ENCODE measurements at regions of chr2 and their contacts with region 1.

Region 1: DNA sequence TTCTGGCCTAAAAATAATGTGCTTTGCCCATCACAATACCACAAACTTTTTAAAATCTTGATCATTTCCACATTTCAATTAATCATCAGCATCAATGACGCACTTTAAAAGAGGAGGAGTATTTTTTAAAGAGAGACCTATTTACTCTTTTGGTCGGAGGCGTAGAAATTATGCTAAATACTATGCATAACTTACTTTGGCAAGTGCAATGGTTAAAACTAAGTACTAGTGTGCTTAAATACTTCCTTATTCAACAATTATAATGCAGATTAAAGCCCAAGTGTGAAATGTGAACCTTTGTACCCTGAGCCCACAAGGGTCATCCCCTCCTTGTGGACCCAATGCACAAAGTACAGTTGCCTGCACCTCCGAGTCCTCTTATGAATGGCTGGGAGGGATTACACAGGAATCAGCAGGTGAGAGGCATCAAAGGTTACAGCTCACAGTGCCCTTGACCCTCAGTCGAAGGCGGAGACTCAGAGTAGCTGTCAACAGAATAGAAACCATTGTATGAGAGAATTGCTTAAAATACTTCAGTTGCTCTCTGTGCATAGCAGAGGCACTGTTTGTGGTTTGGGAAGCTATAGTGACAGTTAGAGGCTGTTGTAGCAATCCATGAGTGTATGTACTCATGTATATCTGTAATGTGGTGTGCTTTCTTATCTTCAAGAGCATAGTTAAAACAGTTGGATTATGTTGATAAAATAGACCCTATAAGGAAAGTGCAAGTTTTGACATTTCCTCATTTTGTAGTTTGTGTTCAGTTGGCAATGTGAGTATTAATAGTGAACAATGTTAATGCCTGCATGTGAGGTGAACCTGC is 151.7 kb upstream of the ITGA4 start:
- DNase-seq: peak in 5 of 9 donors; percentile 47 to 61 (median 54)
- ATAC-seq: peak; percentile 77
- H3K4me3 ChIP-seq: peak overlapping the region; percentile 14
- H3K4me3 Mint-ChIP-seq: peak overlapping the region; percentile 71 to 94 (median 82)
- H3K27ac ChIP-seq: peak overlapping the region; percentile 84
- H3K27ac Mint-ChIP-seq: peak overlapping the region; percentile 90 to 100 (median 95)
- H3K4me1 ChIP-seq: peaks cover 66 to 73% of the 10 kb centered on the region in 2 donors
- H3K4me1 Mint-ChIP-seq: peaks cover 49 to 90% (median 84%) of the 10 kb centered on the region in 7 donors
- H3K27me3 ChIP-seq: no peaks in the 10 kb centered on the region
- H3K27me3 Mint-ChIP-seq: no peaks in the 10 kb centered on the region

Region 2: GRCh38 chr2:180006781-180007579 is 1298.5 kb before region 1 on chr2 and contains the start of gene CWC22:
- CTCF ChIA-PET with region 1: no interaction called
- POLR2A ChIA-PET with region 1: no interaction called
- intact Hi-C with region 1: loop called in 1 of 2 experiments (anchors 5 kb)
- DNase-seq: peak; percentile 73 to 93 (median 89)
- ATAC-seq: peak; percentile 96
- H3K4me3 ChIP-seq: peak within 1 kb of the TSS; percentile 96
- H3K4me3 Mint-ChIP-seq: peak within 1 kb of the TSS; percentile 92 to 100 (median 96)
- H3K27ac ChIP-seq: peak within 1 kb of the TSS; percentile 93
- H3K27ac Mint-ChIP-seq: peak within 1 kb of the TSS; percentile 98 to 100 (median 99)
- H3K4me1 ChIP-seq: peaks cover 8 to 11% of the 10 kb centered on the region in 2 donors
- H3K4me1 Mint-ChIP-seq: peaks cover 19 to 54% (median 49%) of the 10 kb centered on the region in 7 donors
- H3K27me3 ChIP-seq: no peaks in the 10 kb centered on the region
- H3K27me3 Mint-ChIP-seq: peaks cover 0 to 3% (median 0%) of the 10 kb centered on the region in 5 donors
- total RNA-seq, gene CWC22: 14.4 to 32.0 (median 23.5) TPM

Region 3: DNA sequence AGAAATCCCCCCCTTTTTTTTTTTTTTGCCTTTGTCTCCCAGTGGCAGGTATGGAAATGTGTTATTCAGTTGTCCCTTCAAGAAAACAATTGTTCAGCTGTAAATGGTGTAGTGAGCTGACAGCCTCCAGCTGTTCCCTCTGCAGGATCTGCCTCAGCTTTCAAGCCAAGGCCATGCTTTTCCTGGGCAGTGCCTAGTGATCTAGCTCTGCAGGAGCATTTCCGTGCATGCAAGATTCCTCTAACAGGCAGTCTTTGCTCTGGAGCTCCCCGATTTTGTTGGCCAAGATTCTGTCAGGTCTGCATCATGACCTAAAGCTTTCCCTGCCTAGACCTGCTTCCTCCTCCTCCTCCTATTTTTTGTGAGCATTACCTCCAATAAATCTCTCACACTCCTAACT is 625.8 kb before region 1 on chr2:
- CTCF ChIA-PET with region 1: no interaction called
- POLR2A ChIA-PET with region 1: no interaction called
- intact Hi-C with region 1: no loop called
- DNase-seq: no peak
- ATAC-seq: no peak
- H3K4me3 ChIP-seq: no peak overlapping the region
- H3K4me3 Mint-ChIP-seq: no peak overlapping the region
- H3K27ac ChIP-seq: no peak overlapping the region
- H3K27ac Mint-ChIP-seq: no peak overlapping the region
- H3K4me1 ChIP-seq: no peaks in the 10 kb centered on the region
- H3K4me1 Mint-ChIP-seq: no peaks in the 10 kb centered on the region
- H3K27me3 ChIP-seq: no peaks in the 10 kb centered on the region
- H3K27me3 Mint-ChIP-seq: peaks cover 12 to 48% (median 26%) of the 10 kb centered on the region in 5 donors

Region 4: GRCh38 chr2:181140414-181140813 is 165.1 kb before region 1 on chr2:
- CTCF ChIA-PET with region 1: interaction called, 3 read pairs
- POLR2A ChIA-PET with region 1: interaction called, 10 read pairs
- intact Hi-C with region 1: loop called (anchors 1 to 2 kb)
- DNase-seq: peak in 1 of 9 donors; percentile 29
- ATAC-seq: peak; percentile 30
- H3K4me3 ChIP-seq: peak overlapping the region; percentile 20
- H3K4me3 Mint-ChIP-seq: peak overlapping the region; percentile 31 to 94 (median 86)
- H3K27ac ChIP-seq: peak overlapping the region; percentile 78
- H3K27ac Mint-ChIP-seq: peak overlapping the region; percentile 93 to 100 (median 98)
- H3K4me1 ChIP-seq: peaks cover 46 to 66% of the 10 kb centered on the region in 2 donors
- H3K4me1 Mint-ChIP-seq: peaks cover 33 to 83% (median 75%) of the 10 kb centered on the region in 7 donors
- H3K27me3 ChIP-seq: no peaks in the 10 kb centered on the region
- H3K27me3 Mint-ChIP-seq: no peaks in the 10 kb centered on the region

Region 5: DNA sequence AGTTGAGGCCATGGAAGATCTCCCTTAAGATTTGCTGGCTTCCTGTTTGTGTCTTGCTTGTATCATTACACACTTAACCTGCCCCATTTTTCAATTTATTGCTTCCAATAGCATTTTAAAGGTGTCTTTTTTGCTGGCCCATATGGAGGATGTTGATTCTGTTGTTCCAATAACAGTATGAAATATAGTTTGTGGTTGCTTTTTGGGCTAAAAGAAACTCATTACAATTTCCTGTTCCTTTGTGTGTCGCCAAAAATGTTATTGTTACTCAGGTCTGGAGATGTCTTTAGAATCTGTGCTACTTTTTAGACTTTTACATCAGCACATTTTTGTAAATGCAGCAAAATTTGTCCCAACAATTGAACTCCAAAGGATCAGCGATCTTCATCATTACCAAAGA is 82.3 kb before region 1 on chr2:
- CTCF ChIA-PET with region 1: no interaction called
- POLR2A ChIA-PET with region 1: interaction called, 3 read pairs
- intact Hi-C with region 1: loop called in 1 of 2 experiments (anchors 2 kb)
- DNase-seq: peak in 6 of 9 donors; percentile 13 to 54 (median 44)
- ATAC-seq: no peak
- H3K4me3 ChIP-seq: peak overlapping the region; percentile 0
- H3K4me3 Mint-ChIP-seq: peak overlapping the region in 9 of 10 donors; percentile 58 to 84 (median 66)
- H3K27ac ChIP-seq: peak overlapping the region; percentile 4
- H3K27ac Mint-ChIP-seq: peak overlapping the region; percentile 57 to 97 (median 88)
- H3K4me1 ChIP-seq: peaks cover 25% of the 10 kb centered on the region in 2 donors
- H3K4me1 Mint-ChIP-seq: peaks cover 7 to 64% (median 37%) of the 10 kb centered on the region in 7 donors
- H3K27me3 ChIP-seq: no peaks in the 10 kb centered on the region
- H3K27me3 Mint-ChIP-seq: no peaks in the 10 kb centered on the region

Region 6: DNA sequence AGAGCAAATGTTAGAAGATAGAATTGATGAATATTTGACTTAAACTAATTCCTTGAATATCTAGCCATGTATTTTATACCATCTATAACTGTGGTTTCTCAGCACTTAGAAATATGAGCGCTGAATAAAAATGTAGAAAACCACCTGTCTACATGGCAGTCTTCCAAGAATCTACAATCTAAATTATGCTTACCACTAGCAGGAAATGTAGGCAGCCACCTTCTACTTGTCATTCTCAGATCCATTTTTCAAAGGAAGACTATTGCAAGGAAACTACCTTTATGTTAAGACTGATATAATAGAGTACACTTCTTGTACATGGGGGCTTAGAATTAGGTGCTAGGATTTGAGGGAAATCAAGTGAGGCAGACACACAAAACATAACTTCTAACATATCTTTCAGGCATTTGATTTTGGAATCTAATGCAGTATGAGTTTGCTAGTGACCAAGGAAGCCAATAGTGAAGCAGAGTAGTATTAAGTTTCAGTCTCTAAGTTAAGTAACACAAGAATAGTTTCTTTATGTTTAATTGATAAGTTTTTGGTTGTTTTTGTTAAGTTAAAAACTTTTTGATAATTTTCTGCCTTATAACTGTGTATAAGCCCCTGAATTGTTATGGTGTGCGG is 24.2 kb before region 1 on chr2:
- CTCF ChIA-PET with region 1: interaction called, 5 read pairs
- POLR2A ChIA-PET with region 1: interaction called, 3 read pairs
- intact Hi-C with region 1: loop called (anchors 1 to 5 kb)
- DNase-seq: peak in 7 of 9 donors; percentile 47 to 84 (median 70)
- ATAC-seq: peak; percentile 92
- H3K4me3 ChIP-seq: no peak overlapping the region
- H3K4me3 Mint-ChIP-seq: peak overlapping the region in 9 of 10 donors; percentile 10 to 74 (median 62)
- H3K27ac ChIP-seq: peak overlapping the region; percentile 17
- H3K27ac Mint-ChIP-seq: peak overlapping the region; percentile 75 to 95 (median 84)
- H3K4me1 ChIP-seq: peaks cover 18 to 31% of the 10 kb centered on the region in 2 donors
- H3K4me1 Mint-ChIP-seq: peaks cover 24 to 69% (median 58%) of the 10 kb centered on the region in 7 donors
- H3K27me3 ChIP-seq: no peaks in the 10 kb centered on the region
- H3K27me3 Mint-ChIP-seq: no peaks in the 10 kb centered on the region

Region 7: DNA sequence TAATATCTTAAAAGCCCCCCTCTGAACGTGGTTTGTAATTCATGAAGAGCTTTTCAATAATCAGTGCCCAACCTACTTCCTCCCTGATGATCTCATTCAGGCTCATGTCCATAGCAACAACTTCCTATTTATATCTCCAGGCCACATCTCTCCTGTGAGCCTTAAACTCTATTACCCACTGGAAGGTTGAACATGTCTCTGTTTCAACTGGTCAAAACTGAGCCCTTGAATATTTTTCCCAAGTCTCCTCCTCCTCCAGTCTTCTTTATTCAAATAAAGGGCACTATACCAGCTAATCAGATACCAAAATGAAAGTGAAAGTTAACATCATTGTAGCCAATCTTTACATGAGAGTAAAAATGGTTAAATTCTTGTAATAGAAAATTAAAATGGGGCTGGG is 88.0 kb after region 1 on chr2:
- CTCF ChIA-PET with region 1: interaction called, 4 read pairs
- POLR2A ChIA-PET with region 1: interaction called, 3 read pairs
- intact Hi-C with region 1: loop called in 1 of 2 experiments (anchors 1 kb)
- DNase-seq: peak in 3 of 9 donors; percentile 8 to 14 (median 12)
- ATAC-seq: peak; percentile 77
- H3K4me3 ChIP-seq: peak overlapping the region; percentile 49
- H3K4me3 Mint-ChIP-seq: peak overlapping the region; percentile 46 to 79 (median 66)
- H3K27ac ChIP-seq: peak overlapping the region; percentile 10
- H3K27ac Mint-ChIP-seq: peak overlapping the region; percentile 38 to 84 (median 69)
- H3K4me1 ChIP-seq: peaks cover 20 to 21% of the 10 kb centered on the region in 2 donors
- H3K4me1 Mint-ChIP-seq: peaks cover 20 to 44% (median 32%) of the 10 kb centered on the region in 7 donors
- H3K27me3 ChIP-seq: no peaks in the 10 kb centered on the region
- H3K27me3 Mint-ChIP-seq: no peaks in the 10 kb centered on the region

Region 8: DNA sequence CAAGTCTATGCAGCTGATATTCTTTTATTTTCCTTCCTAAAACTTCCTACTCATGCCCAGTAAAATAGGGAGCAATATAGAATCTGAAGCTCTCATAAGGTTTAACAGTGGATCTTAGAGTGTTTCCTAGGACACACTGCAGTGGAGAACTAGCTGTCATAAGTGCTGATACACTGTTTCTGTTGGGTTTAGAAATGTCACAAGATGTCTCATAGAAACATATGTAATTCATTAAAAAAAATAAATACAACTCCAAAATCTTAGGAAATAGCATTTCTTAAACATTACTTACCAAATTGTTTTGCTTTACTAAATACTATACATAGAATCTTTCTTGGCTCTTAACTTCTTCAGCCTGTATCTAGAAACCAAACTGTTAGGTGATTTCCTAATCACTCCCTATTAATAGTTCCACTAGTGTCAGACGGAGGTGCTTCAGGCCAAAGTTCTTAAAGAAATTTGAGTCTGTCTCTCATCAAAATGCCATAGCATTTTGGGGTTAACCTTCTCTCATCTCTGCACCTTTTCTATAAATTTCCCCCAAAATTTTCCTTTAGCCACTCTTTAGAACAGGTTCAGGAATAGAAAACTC is 257.7 kb after region 1 on chr2:
- CTCF ChIA-PET with region 1: no interaction called
- POLR2A ChIA-PET with region 1: no interaction called
- intact Hi-C with region 1: no loop called
- DNase-seq: no peak
- ATAC-seq: no peak
- H3K4me3 ChIP-seq: no peak overlapping the region
- H3K4me3 Mint-ChIP-seq: no peak overlapping the region
- H3K27ac ChIP-seq: no peak overlapping the region
- H3K27ac Mint-ChIP-seq: no peak overlapping the region
- H3K4me1 ChIP-seq: no peaks in the 10 kb centered on the region
- H3K4me1 Mint-ChIP-seq: peaks cover 0 to 9% (median 0%) of the 10 kb centered on the region in 7 donors
- H3K27me3 ChIP-seq: no peaks in the 10 kb centered on the region
- H3K27me3 Mint-ChIP-seq: no peaks in the 10 kb centered on the region

Region 9: GRCh38 chr2:181586569-181587081 is 281.1 kb after region 1 on chr2:
- CTCF ChIA-PET with region 1: no interaction called
- POLR2A ChIA-PET with region 1: no interaction called
- intact Hi-C with region 1: no loop called
- DNase-seq: no peak
- ATAC-seq: no peak
- H3K4me3 ChIP-seq: no peak overlapping the region
- H3K4me3 Mint-ChIP-seq: no peak overlapping the region
- H3K27ac ChIP-seq: no peak overlapping the region
- H3K27ac Mint-ChIP-seq: peak overlapping the region in 1 of 9 donors; percentile 44
- H3K4me1 ChIP-seq: peaks cover 0 to 6% of the 10 kb centered on the region in 2 donors
- H3K4me1 Mint-ChIP-seq: peaks cover 9 to 17% (median 14%) of the 10 kb centered on the region in 7 donors
- H3K27me3 ChIP-seq: no peaks in the 10 kb centered on the region
- H3K27me3 Mint-ChIP-seq: peaks cover 4 to 34% (median 13%) of the 10 kb centered on the region in 5 donors

Region 10: GRCh38 chr2:181715033-181715630 is 409.6 kb after region 1 on chr2:
- CTCF ChIA-PET with region 1: interaction called, 5 read pairs
- POLR2A ChIA-PET with region 1: no interaction called
- intact Hi-C with region 1: loop called in 1 of 2 experiments (anchors 1 kb)
- DNase-seq: peak; percentile 30 to 78 (median 64)
- ATAC-seq: peak; percentile 90
- H3K4me3 ChIP-seq: no peak overlapping the region
- H3K4me3 Mint-ChIP-seq: no peak overlapping the region
- H3K27ac ChIP-seq: no peak overlapping the region
- H3K27ac Mint-ChIP-seq: no peak overlapping the region
- H3K4me1 ChIP-seq: no peaks in the 10 kb centered on the region
- H3K4me1 Mint-ChIP-seq: no peaks in the 10 kb centered on the region
- H3K27me3 ChIP-seq: no peaks in the 10 kb centered on the region
- H3K27me3 Mint-ChIP-seq: peaks cover 0 to 11% (median 0%) of the 10 kb centered on the region in 5 donors